ENCODE measurements at regions of chr3 and their contacts with region 1.

Region 1: GRCh38 chr3:87179642-87180041 is 47.5 kb upstream of the CHMP2B start:
- DNase-seq: no peak
- CTCF ChIP-seq: no peak

Region 2: GRCh38 chr3:87167628-87168456 is 11.8 kb before region 1 on chr3:
- CTCF ChIA-PET with region 1: interaction called, 18 read pairs
- POLR2A ChIA-PET with region 1: no interaction called
- DNase-seq: peak; percentile 14
- CTCF ChIP-seq: peak; percentile 60